WTC11 (cell line): ENCODE measurements at regions of chr4 and their contacts with region 1.

Region 1: GRCh38 chr4:54233277-54233696 is 4.2 kb downstream of the PDGFRA start:
- DNase-seq: peak; percentile 84
- ATAC-seq: peak; percentile 57
- H3K4me3 Mint-ChIP-seq: peak overlapping the region; percentile 82
- H3K27ac Mint-ChIP-seq: no peak overlapping the region
- H3K4me1 Mint-ChIP-seq: peaks cover 32% of the 10 kb centered on the region
- H3K27me3 Mint-ChIP-seq: peaks cover 76% of the 10 kb centered on the region
- CTCF ChIP-seq: peak; percentile 7; the same call in 1 of the 2 replicates

Region 2: DNA sequence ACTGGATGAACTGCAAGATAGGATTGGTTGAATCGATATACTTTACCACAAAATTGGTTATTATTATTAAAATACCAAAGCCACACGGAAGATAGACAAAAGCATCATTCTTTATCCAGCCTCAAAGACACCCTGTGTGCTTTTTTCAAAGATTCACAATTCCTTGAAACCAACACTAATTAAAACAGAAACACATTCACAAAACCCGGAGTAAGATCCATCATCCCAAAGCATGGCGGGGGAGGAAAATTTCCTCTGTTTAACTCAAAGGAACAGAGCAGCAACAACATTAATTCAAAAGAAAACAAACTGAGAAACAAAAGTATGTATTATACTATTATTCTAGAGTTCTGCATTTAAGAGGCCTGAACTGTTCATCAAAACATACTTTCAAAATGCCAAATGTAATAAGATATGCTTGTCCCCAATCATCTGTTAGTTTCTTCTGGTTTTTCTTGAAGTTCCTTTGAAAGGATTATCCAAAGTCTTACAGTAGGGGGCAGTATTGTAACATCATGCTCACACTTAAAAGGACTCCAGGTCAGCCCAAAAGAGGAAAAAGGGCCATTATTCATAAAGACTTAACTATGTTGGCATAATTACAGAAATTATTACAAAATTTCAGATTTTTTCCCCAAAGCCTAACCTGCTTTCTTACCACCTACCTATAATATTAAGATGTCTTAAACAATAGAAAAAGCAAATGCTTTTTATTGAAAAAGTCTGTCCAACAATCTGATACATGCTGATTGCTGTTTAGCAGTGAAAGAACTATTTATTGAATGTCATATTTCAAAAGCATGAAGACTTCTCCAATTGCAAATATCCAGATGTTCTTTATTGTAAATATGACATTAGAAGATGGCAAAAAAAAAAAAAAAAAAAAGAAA is 1036.2 kb before region 1 on chr4:
- CTCF ChIA-PET with region 1: interaction called, 26 read pairs
- POLR2A ChIA-PET with region 1: no interaction called
- DNase-seq: no peak
- ATAC-seq: 0 out of 2 replicates have a peak, but pooled peaks have one; percentile 47
- H3K4me3 Mint-ChIP-seq: no peak overlapping the region
- H3K27ac Mint-ChIP-seq: no peak overlapping the region; the same call in 1 of the 2 replicates
- H3K4me1 Mint-ChIP-seq: 0 out of 2 replicates have a peak, but pooled peaks cover 2% of the 10 kb centered on the region
- H3K27me3 Mint-ChIP-seq: no peaks in the 10 kb centered on the region
- CTCF ChIP-seq: peak; percentile 73

Region 3: GRCh38 chr4:53601251-53601764 is 632.0 kb before region 1 on chr4:
- CTCF ChIA-PET with region 1: interaction called, 14 read pairs
- POLR2A ChIA-PET with region 1: no interaction called
- DNase-seq: peak; percentile 72
- ATAC-seq: peak; percentile 99
- H3K4me3 Mint-ChIP-seq: no peak overlapping the region
- H3K27ac Mint-ChIP-seq: no peak overlapping the region
- H3K4me1 Mint-ChIP-seq: peaks cover 21% of the 10 kb centered on the region
- H3K27me3 Mint-ChIP-seq: no peaks in the 10 kb centered on the region
- CTCF ChIP-seq: peak; percentile 35; the same call in 1 of the 2 replicates

Region 4: GRCh38 chr4:53902786-53903185 is 330.5 kb before region 1 on chr4:
- CTCF ChIA-PET with region 1: interaction called, 111 read pairs
- POLR2A ChIA-PET with region 1: no interaction called
- DNase-seq: no peak
- ATAC-seq: no peak
- H3K4me3 Mint-ChIP-seq: no peak overlapping the region
- H3K27ac Mint-ChIP-seq: no peak overlapping the region
- H3K4me1 Mint-ChIP-seq: peaks cover 27% of the 10 kb centered on the region
- H3K27me3 Mint-ChIP-seq: peaks cover 19% of the 10 kb centered on the region
- CTCF ChIP-seq: no peak

Region 5: GRCh38 chr4:53959373-53960120 is 273.7 kb before region 1 on chr4:
- CTCF ChIA-PET with region 1: interaction called, 10 read pairs
- POLR2A ChIA-PET with region 1: no interaction called
- DNase-seq: no peak
- ATAC-seq: no peak
- H3K4me3 Mint-ChIP-seq: no peak overlapping the region
- H3K27ac Mint-ChIP-seq: no peak overlapping the region
- H3K4me1 Mint-ChIP-seq: peaks cover 38% of the 10 kb centered on the region
- H3K27me3 Mint-ChIP-seq: no peaks in the 10 kb centered on the region
- CTCF ChIP-seq: no peak

Region 6: DNA sequence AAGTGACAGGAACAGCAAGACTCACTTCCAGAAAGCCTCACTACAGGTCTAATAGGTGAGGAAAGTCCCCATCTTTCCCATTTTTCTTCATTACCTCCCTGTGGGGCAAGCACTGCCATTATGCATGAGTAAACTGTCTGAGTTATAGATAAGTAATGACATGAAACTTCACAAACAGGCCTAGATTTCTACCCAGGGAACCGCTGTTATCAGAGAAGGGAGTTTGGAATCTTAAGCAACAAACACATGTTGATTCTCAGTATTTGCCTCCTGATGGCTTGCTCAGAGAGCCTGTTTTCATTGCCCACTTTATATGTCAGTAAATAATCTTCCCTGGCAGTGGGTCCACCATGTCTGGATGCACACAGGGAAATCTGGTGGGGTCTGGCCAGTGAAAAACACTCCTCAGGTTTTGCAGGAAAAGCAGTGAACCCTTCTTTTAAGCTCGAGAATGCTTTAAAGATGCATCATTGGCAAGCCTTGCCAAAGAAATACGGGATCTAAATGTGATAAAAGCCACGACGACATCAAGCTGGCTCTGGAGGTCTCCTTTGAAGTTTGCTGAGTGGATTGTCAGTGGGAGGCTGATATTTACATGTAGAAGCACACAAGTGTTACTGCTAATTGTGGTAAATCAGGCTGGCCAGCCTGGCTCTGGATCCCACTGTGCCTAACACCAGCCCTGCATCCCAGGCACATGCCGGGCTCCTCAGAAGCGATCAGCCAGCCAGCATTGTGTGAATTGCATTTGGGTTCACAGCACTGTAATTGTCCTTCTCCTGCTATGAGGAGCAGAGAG is 21.0 kb after region 1 on chr4:
- CTCF ChIA-PET with region 1: interaction called, 15 read pairs
- POLR2A ChIA-PET with region 1: no interaction called
- DNase-seq: no peak
- ATAC-seq: peak; percentile 79
- H3K4me3 Mint-ChIP-seq: no peak overlapping the region
- H3K27ac Mint-ChIP-seq: no peak overlapping the region
- H3K4me1 Mint-ChIP-seq: peaks cover 15% of the 10 kb centered on the region
- H3K27me3 Mint-ChIP-seq: peaks cover 9% of the 10 kb centered on the region
- CTCF ChIP-seq: no peak

Region 7: DNA sequence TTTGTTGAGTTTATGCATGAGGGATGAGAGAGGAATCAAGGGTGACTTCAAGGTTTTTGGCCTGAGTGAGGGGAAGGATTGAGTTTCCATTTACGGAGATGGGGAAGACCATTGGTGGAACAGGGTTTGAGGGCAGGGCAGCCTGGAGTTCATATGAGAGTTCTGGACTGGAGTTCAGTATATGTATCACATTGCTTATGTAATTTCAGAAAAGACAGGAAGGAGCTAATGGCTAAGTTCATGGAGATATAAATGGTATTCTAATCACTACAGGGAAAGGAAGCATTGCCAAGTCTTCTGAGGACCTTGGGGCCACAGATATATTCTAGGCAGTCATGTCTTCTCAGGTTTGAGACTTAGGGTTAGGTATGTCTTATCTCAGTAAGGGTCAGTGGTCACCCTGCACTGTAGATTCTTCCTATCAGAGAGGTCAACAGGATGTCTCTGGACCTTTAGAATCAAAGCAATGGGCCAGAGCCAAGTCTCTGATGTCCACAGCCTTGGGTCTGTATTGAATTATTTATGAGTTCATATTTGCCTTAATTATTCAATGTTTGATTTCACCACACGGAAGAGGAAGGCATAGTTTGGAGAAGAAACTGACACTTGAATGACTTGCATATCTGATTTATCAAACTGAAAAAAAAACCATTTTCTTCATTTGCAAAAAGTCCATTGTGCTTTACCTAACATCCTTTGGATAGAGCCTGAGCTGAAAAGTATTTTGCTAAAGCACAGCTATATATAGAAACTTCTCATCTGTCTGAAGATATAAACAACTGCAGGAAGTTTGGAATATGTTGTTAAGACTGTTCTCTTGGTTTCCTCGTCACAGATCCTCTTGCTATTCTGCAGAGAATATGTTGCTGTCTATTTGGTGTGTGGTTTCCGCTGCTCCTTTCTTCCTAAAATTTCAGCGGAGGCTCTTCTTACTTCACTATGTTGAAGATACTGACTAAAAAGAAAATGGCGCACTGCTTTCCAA is 135.3 kb after region 1 on chr4:
- CTCF ChIA-PET with region 1: no interaction called
- POLR2A ChIA-PET with region 1: no interaction called
- DNase-seq: no peak
- ATAC-seq: no peak
- H3K4me3 Mint-ChIP-seq: no peak overlapping the region
- H3K27ac Mint-ChIP-seq: no peak overlapping the region
- H3K4me1 Mint-ChIP-seq: peaks cover 3% of the 10 kb centered on the region; the same call in 1 of the 2 replicates
- H3K27me3 Mint-ChIP-seq: no peaks in the 10 kb centered on the region; the same call in 1 of the 2 replicates
- CTCF ChIP-seq: no peak

Region 8: DNA sequence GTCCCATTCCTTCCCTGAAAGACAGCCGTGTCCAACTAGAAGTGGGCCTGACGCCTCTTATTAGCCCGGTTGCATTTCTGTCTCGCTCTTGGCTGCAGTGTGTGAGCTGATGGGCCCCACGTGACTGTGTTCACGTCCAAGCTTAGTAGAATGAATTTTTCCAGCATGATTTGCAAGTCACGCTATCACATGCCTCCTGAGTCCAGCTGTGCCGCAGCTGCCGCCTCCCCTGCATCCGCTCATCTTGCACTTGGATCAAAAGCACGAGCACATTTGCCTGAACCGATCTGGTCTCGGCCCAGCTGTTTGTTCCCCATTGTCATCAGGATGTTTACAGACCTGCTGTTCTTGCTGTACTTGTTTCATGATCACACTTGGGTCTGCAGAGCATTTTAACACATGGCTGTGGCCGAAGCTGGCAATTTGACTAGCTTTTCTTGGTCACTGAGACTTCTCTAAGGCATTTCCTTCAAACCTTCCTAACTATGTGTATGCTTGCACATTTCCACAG is 550.9 kb after region 1 on chr4:
- CTCF ChIA-PET with region 1: no interaction called
- POLR2A ChIA-PET with region 1: no interaction called
- DNase-seq: no peak
- ATAC-seq: no peak
- H3K4me3 Mint-ChIP-seq: no peak overlapping the region
- H3K27ac Mint-ChIP-seq: no peak overlapping the region
- H3K4me1 Mint-ChIP-seq: no peaks in the 10 kb centered on the region
- H3K27me3 Mint-ChIP-seq: no peaks in the 10 kb centered on the region
- CTCF ChIP-seq: no peak